OCI-LY7 (cell line): ENCODE measurements at regions of chr16 and their contacts with region 1.

Region 1: DNA sequence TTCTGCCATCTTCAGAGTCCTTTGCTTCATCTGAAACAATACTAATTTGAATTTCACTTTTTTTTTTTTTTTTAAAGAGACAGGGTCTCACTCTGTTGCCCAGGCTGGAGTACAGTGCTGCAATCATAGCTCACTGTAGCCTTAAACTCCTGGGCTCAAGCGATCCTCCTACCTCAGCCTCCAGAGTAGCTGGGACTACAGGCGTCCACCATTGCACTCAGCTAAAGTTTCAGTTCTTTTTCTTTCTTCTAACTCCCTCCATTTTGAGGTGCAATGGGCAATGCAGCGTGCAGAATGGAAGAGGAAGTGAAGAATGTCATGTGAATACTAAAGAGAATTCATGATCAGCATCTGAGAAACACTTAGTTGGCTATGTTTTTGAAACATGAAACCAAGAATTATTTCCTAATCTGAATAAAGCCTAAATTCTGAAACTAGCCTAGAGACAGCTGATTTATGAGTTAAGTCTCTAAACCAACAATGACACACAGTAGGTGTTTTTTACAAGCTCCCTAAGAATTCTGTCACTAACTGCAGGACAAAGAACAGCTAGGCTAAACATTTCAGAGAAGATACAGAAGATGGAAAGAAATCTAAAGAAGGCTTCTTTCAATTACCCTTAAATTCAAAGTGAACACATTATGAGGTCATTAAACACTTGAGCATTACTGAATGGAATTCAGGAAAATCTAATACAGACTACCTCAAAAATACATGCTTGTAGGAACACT is 20.9 kb downstream of the SNN start:
- DNase-seq: peak; percentile 91
- H3K4me3 ChIP-seq: peak overlapping the region; percentile 65
- H3K27ac ChIP-seq: peak overlapping the region; percentile 98
- H3K4me1 ChIP-seq: peaks cover 80% of the 10 kb centered on the region
- CTCF ChIP-seq: no peak

Region 2: GRCh38 chr16:11708421-11708820 is 19.2 kb after region 1 on chr16:
- CTCF ChIA-PET with region 1: interaction called, 3 read pairs
- POLR2A ChIA-PET with region 1: interaction called, 15 read pairs
- intact Hi-C with region 1: no loop called
- DNase-seq: no peak
- H3K4me3 ChIP-seq: no peak overlapping the region
- H3K27ac ChIP-seq: no peak overlapping the region
- H3K4me1 ChIP-seq: peaks cover 43% of the 10 kb centered on the region
- CTCF ChIP-seq: no peak

Region 3: DNA sequence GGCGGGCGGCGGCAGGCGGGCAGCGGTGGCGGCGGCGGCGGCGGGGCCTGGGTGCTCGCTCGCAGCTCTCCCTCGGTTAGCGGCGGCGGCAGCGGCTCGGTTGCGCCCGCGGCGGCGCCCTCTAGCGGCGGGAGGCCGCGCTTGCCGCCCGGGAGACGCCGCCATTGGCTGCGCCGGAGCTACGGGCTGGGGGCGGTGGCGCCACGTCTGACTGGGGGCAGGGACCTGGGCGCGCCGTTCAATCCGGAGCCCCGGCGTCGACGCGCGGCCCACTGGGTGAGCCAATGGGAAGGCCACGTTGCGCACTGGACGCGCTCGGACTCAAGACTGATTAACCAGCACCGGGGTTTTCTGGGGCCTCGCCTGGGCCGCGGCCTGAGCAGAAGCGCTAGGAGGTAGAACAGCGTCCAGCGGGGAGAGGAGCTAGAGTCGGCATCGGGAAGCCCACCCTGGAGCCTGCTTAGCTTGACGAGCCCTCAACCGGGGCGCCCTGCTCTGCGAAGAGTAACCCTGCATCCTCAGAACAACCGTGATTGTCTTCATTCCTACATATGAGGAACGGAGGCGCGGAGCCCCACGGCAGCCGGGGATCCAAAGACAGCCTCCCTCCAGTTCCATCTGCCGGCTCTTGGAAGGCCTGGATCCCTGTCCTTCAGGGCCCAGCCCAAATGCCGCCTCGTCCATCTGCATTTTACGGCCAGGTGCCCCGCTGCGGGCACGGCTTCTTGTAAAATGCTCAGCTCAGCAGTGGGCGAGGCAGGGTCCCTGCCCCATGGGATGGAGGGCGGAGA is 108.2 kb after region 1 on chr16 and contains the start of gene ZC3H7A:
- CTCF ChIA-PET with region 1: interaction called, 5 read pairs
- POLR2A ChIA-PET with region 1: interaction called, 4 read pairs
- intact Hi-C with region 1: loop called (anchors 2 kb)
- DNase-seq: peak; percentile 98
- H3K4me3 ChIP-seq: peak within 1 kb of the TSS; percentile 92
- H3K27ac ChIP-seq: peak within 1 kb of the TSS; percentile 79
- H3K4me1 ChIP-seq: peaks cover 62% of the 10 kb centered on the region
- CTCF ChIP-seq: peak; percentile 66
- total RNA-seq, gene ZC3H7A: 28.6 and 32.1 TPM in 2 replicates

Region 4: DNA sequence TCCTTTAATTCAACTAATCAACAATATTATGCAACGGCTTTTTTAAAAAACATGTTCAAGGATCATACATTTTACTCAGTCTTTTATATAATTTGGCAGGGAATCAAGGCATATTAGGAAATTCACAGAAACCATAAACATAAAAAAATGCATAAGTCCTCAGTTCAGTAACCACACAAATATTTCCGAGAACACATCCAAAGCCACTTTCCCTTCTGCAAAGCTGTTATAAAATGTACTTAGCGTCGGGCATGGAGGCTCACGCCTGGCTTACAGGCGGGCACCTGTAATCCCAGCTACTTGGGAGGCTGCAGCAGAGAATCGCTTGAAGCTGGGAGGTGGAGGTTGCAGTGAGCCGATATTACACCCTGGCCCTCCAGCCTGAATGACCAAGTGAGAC is 117.5 kb after region 1 on chr16:
- CTCF ChIA-PET with region 1: no interaction called
- POLR2A ChIA-PET with region 1: interaction called, 8 read pairs
- intact Hi-C with region 1: loop called (anchors 5 kb)
- DNase-seq: no peak
- H3K4me3 ChIP-seq: no peak overlapping the region
- H3K27ac ChIP-seq: no peak overlapping the region
- H3K4me1 ChIP-seq: peaks cover 8% of the 10 kb centered on the region
- CTCF ChIP-seq: no peak